ENCODE measurements at regions of chr9 and their contacts with region 1.

Region 1: DNA sequence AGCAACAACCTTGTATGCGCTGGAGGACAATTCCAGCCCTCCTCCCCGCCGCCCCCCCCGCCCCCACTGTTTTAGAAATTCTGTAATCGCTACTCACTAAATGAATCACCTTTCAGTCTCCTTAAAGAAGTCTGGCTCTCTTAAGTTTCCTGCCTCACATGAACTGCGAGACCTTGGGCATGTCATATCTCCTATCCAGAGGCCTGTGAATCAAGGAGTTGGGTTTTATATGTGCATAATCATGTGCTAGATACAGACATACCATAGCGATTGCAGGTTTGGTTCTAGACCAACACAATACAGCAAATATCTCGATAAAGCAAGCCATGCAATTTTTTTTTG is 337 bp upstream of the DMAC1 start:
- DNase-seq: no peak
- ATAC-seq: peak; percentile 16

Region 2: DNA sequence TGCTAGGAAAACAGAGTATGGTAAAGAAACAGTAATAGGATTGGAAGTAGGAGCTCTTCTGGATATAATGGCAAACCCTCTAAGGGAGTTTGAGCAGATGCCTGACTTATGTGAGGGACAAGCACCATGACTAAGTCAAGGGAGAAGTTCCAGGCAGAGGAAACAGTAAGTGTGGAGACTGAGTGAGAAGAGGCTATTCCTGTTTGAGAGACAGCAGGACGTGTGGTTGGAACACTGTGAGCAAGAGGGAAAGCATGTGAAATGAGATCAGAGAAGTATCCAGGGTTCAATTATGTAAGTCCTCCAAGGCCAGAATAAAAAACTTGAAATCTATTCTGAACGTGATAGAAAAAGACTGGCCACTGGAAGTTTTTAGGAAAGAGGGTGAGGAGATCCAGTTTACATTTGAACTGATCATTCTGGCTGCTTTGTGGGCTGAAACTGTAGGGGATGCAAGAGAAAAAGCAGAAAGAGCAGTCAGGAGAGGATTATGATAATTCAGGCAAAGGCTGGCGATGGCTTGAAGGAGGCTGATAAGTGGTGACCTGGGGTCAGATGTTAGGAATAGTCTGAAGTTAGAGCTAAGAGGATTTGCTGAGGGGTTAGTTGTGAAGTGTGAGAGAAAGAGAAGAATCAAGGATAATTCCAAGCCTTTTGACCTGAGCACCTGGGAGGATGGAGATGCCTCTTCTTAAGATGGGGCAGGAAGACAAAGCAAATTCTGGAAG is 19.5 kb before region 1 on chr9:
- intact Hi-C with region 1: no loop called
- DNase-seq: no peak
- ATAC-seq: no peak

Region 3: DNA sequence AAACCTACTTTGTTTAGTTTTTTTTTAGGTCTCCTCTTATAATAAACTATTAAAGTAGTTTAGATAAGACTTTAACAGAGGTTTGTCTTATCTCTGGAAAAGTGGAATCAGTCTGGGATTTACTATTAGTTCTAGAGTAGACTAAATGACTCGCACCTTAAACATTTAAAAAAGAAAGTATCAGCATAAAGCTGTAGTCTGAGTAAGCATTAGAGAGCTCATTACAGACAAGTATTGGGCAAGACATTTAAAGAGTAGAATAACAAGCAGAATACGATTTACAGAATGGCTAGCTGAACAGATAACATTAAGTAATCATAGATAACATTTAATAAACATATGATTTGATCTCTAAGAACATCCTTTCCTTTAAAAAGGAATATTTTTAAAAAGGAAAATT is 225.6 kb after region 1 on chr9:
- intact Hi-C with region 1: loop called (anchors 5 kb)
- DNase-seq: no peak
- ATAC-seq: no peak

Region 4: GRCh38 chr9:8315211-8315610 is 515.3 kb after region 1 on chr9:
- intact Hi-C with region 1: no loop called
- DNase-seq: no peak
- ATAC-seq: no peak

Measured in sciatic nerve (tissue), 2 donors.